ENCODE measurements at regions of chr10 and their contacts with region 1.

Region 1: DNA sequence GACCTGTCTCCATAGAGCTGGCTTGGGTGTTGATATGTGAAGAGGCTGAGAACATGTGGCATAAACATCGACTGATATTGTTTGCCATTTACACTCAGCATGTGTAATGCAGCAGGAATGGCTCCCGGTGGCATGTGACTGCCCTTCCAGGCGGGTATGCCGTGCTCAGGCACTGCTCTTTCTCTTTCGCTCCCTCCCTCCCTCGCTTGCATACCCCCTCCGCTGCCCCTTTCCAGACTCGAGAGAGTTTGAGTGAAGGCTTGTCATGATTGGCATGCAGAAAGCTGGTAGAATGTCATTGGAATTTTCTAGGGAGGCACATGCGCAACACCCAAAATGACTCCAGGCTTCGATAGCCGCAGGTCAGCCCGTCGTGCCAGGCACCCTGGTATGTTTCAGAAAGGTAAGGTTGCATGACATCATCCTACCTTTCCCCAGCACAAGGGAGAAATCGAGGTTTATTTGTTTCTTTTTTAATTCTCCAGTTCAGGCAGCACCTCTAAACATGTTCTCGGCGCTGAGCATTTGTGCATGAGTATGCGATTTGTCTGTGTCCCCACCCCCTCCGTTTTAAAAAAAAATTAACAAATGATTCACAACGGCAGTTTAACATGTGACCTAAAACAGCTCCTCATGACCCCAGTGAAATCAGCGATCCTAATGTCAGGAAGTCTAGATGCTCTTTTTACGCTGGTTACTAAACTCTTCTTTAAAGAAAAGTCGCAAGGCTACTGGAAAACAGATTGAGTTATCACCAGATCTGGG is 107.1 kb upstream of the PDCD4 start:
- DNase-seq: peak in 1 of 2 donors; percentile 83
- ATAC-seq: peak; percentile 89 to 91 (median 90)
- H3K4me3 ChIP-seq: peak overlapping the region; percentile 60
- H3K27ac ChIP-seq: peak overlapping the region; percentile 89
- H3K4me1 ChIP-seq: peaks cover 43% of the 10 kb centered on the region
- H3K27me3 ChIP-seq: no peaks in the 10 kb centered on the region
- CTCF ChIP-seq: no peak

Region 2: GRCh38 chr10:110076559-110077318 is 687.9 kb before region 1 on chr10:
- intact Hi-C with region 1: no loop called
- DNase-seq: peak in 1 of 2 donors; percentile 38
- ATAC-seq: peak; percentile 52 to 77 (median 74)
- H3K4me3 ChIP-seq: peak overlapping the region; percentile 43
- H3K27ac ChIP-seq: peak overlapping the region; percentile 54
- H3K4me1 ChIP-seq: peaks cover 61% of the 10 kb centered on the region
- H3K27me3 ChIP-seq: no peaks in the 10 kb centered on the region
- CTCF ChIP-seq: no peak

Region 3: GRCh38 chr10:110576220-110576619 is 188.4 kb before region 1 on chr10:
- intact Hi-C with region 1: no loop called
- DNase-seq: no peak
- ATAC-seq: no peak
- H3K4me3 ChIP-seq: no peak overlapping the region
- H3K27ac ChIP-seq: no peak overlapping the region
- H3K4me1 ChIP-seq: peaks cover 26% of the 10 kb centered on the region
- H3K27me3 ChIP-seq: no peaks in the 10 kb centered on the region
- CTCF ChIP-seq: no peak

Region 4: DNA sequence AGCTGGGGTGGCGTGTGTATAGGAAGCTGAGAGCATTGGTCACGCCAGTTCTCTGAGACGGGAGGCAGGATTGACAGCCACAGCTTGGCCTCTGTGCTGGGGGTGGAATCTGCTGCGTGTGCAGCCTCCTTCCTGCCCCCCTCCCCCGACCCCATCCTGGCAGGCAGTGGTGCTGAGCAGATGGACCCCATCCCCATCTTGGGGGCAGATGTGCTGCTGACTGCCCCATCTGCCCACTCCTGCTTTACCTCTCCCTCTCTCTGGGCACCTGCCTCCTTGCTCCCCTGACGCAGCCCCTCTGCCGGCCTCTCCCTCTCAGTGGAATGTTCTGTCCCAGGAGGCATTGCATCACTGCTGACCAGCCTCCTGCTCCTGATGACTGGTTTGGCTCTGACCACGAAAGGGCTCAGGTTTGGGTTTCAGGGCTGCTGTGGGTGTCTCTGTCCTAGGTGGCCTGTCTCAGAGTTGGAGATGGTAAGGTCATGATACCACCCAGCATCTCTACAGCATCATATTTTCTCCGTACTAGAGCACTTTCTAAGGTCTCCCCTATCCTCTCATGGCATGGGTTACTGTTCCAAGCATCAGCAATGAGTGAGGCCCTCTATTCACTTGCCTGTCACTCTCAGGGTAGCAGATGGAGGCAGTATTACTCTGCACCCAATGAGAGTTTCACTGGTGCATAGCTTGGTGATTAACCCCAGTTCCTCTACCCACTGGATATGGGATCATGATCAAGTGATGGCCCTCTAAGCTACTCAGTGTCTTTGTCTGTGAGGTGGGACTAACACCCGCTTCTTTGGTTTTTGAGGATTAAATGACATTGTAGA is 38.6 kb before region 1 on chr10:
- intact Hi-C with region 1: loop called in 1 of 2 experiments (anchors 5 kb)
- DNase-seq: peak; percentile 75 to 92
- ATAC-seq: peak; percentile 80 to 92 (median 84)
- H3K4me3 ChIP-seq: peak overlapping the region; percentile 54
- H3K27ac ChIP-seq: peak overlapping the region; percentile 94
- H3K4me1 ChIP-seq: peaks cover 76% of the 10 kb centered on the region
- H3K27me3 ChIP-seq: no peaks in the 10 kb centered on the region
- CTCF ChIP-seq: no peak

Region 5: DNA sequence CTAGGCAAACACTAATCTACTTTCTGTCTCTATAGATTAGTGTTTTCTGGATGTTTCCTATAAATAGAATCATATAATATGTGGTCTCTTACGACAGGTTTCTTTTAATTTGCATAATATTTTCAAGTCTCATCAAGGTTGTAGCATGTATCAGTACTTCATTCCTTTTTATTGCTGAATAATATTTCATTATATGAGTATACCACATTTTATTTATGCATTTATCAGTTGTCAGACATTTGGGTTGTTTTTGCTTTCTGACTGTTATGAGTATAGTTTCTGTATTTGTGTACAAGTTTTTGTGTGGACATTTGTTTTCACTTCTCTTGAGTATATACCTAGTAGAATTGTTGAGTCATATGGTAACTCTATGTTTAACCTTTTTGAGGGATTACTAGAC is 203.0 kb after region 1 on chr10:
- intact Hi-C with region 1: no loop called
- DNase-seq: no peak
- ATAC-seq: no peak
- H3K4me3 ChIP-seq: no peak overlapping the region
- H3K27ac ChIP-seq: no peak overlapping the region
- H3K4me1 ChIP-seq: peaks cover 8% of the 10 kb centered on the region
- H3K27me3 ChIP-seq: no peaks in the 10 kb centered on the region
- CTCF ChIP-seq: no peak

Region 6: DNA sequence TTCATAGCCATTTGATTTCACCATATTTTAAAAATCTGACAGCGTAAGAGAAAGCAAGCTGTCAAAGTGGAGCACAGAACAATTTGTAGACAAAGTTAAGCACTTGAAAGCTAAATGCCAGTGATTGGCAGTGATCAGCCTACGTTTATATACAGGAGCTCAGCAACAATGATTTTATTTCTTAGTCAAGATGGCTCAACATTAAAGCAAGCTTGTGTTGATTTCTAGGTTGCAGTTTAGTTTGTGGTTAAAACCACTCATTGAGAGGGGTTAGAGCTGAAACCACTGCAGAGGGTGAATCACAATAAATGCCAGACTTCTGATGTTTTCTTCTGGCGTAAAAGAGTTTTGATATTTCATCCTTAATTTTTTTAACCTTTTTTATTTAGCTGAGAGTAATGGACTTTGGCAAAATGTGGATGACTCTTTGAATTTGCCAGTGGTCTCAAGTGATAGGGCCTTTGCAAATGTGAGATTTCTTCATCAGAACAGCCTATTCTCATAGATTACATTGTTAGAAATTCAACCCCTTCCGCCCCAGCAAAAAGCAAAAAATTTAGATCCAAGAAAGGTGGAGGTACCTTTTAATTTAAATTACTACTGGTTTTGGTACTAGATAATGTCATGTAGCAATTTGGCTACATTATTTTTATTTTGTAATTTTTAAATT is 228.6 kb after region 1 on chr10:
- intact Hi-C with region 1: no loop called
- DNase-seq: no peak
- ATAC-seq: no peak
- H3K4me3 ChIP-seq: no peak overlapping the region
- H3K27ac ChIP-seq: no peak overlapping the region
- H3K4me1 ChIP-seq: peaks cover 11% of the 10 kb centered on the region
- H3K27me3 ChIP-seq: no peaks in the 10 kb centered on the region
- CTCF ChIP-seq: no peak